ENCODE measurements at regions of chr11 and their contacts with region 1.

Region 1: GRCh38 chr11:2532704-2533586 is 88.1 kb downstream of the KCNQ1 start:
- DNase-seq: peak; percentile 85 to 97 (median 92)
- ATAC-seq: peak; percentile 86
- H3K4me3 ChIP-seq: peak overlapping the region; percentile 18 to 28
- H3K4me3 Mint-ChIP-seq: peak overlapping the region; percentile 76
- H3K27ac ChIP-seq: no peak overlapping the region
- H3K27ac Mint-ChIP-seq: no peak overlapping the region
- H3K4me1 ChIP-seq: peaks cover 19% of the 10 kb centered on the region
- H3K4me1 Mint-ChIP-seq: peaks cover 20% of the 10 kb centered on the region
- H3K27me3 ChIP-seq: no peaks in the 10 kb centered on the region
- H3K27me3 Mint-ChIP-seq: no peaks in the 10 kb centered on the region
- CTCF ChIP-seq: peak; percentile 94

Region 2: GRCh38 chr11:2186669-2187279 is 346.2 kb before region 1 on chr11:
- CTCF ChIA-PET with region 1: interaction called, 13 read pairs
- POLR2A ChIA-PET with region 1: no interaction called
- intact Hi-C with region 1: loop called in 1 of 2 experiments (anchors 5 kb)
- DNase-seq: peak; percentile 32 to 78 (median 52)
- ATAC-seq: peak; percentile 97
- H3K4me3 ChIP-seq: no peak overlapping the region
- H3K4me3 Mint-ChIP-seq: no peak overlapping the region
- H3K27ac ChIP-seq: no peak overlapping the region
- H3K27ac Mint-ChIP-seq: no peak overlapping the region
- H3K4me1 ChIP-seq: peaks cover 5% of the 10 kb centered on the region
- H3K4me1 Mint-ChIP-seq: peaks cover 5% of the 10 kb centered on the region
- H3K27me3 ChIP-seq: peaks cover 0 to 10% of the 10 kb centered on the region in 2 experiments
- H3K27me3 Mint-ChIP-seq: peaks cover 14% of the 10 kb centered on the region
- CTCF ChIP-seq: peak; percentile 67

Region 3: GRCh38 chr11:2420502-2421225 is 112.3 kb before region 1 on chr11:
- CTCF ChIA-PET with region 1: interaction called, 292 read pairs
- POLR2A ChIA-PET with region 1: no interaction called
- intact Hi-C with region 1: no loop called
- DNase-seq: peak; percentile 52 to 86 (median 69)
- ATAC-seq: peak; percentile 94
- H3K4me3 ChIP-seq: no peak overlapping the region
- H3K4me3 Mint-ChIP-seq: no peak overlapping the region
- H3K27ac ChIP-seq: no peak overlapping the region
- H3K27ac Mint-ChIP-seq: no peak overlapping the region
- H3K4me1 ChIP-seq: peaks cover 14% of the 10 kb centered on the region
- H3K4me1 Mint-ChIP-seq: peaks cover 4% of the 10 kb centered on the region
- H3K27me3 ChIP-seq: peaks cover 0 to 3% of the 10 kb centered on the region in 2 experiments
- H3K27me3 Mint-ChIP-seq: no peaks in the 10 kb centered on the region
- CTCF ChIP-seq: peak; percentile 83

Region 4: DNA sequence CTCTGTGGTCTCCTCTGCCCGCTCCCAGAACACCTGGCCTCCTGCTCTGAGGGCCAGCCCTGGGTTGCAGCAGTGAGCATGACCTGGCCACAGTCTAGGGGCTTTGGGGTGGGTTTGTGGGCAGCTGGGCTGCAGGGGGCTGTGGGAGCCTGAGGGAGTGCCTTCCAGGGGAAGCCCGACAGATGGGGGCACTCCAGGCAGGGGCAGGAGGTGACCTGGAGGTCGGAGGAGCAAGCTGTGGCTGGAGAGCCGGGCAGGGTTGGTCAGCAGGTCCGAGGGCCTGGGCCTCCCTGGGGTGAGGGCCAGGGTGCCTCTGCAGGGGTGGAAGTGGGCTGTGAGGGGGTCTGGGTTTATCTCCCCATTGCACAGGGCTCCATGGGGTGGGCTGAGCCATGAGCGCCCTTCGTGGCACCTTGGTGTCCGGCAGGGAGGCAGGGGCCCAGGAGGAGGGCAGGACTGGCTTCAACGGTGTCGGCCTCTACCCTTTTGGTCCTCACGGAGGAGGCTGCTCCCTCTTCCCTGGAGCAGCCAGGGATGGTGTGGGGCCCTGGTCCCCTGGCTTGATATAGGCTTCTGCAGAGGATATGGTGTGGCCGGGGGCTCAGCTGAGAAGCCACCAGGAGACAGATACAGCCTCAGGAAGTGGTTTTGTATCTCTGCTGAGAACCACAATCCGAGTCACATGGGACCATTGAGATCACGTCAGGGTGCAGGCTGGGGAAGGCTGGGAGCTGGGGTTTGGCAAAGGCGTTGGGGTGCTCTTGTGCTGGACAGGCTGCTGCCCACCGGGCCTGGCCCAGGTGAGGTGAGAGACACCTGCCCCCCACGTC is 65.9 kb before region 1 on chr11:
- CTCF ChIA-PET with region 1: interaction called, 41 read pairs
- POLR2A ChIA-PET with region 1: no interaction called
- intact Hi-C with region 1: no loop called
- DNase-seq: peak in 8 of 9 experiments; percentile 52 to 87 (median 68)
- ATAC-seq: peak; percentile 97
- H3K4me3 ChIP-seq: peak overlapping the region; percentile 16 to 46
- H3K4me3 Mint-ChIP-seq: peak overlapping the region; percentile 75
- H3K27ac ChIP-seq: no peak overlapping the region
- H3K27ac Mint-ChIP-seq: peak overlapping the region; percentile 8
- H3K4me1 ChIP-seq: peaks cover 64% of the 10 kb centered on the region
- H3K4me1 Mint-ChIP-seq: peaks cover 79% of the 10 kb centered on the region
- H3K27me3 ChIP-seq: peaks cover 0 to 2% of the 10 kb centered on the region in 2 experiments
- H3K27me3 Mint-ChIP-seq: no peaks in the 10 kb centered on the region
- CTCF ChIP-seq: no peak

Region 5: DNA sequence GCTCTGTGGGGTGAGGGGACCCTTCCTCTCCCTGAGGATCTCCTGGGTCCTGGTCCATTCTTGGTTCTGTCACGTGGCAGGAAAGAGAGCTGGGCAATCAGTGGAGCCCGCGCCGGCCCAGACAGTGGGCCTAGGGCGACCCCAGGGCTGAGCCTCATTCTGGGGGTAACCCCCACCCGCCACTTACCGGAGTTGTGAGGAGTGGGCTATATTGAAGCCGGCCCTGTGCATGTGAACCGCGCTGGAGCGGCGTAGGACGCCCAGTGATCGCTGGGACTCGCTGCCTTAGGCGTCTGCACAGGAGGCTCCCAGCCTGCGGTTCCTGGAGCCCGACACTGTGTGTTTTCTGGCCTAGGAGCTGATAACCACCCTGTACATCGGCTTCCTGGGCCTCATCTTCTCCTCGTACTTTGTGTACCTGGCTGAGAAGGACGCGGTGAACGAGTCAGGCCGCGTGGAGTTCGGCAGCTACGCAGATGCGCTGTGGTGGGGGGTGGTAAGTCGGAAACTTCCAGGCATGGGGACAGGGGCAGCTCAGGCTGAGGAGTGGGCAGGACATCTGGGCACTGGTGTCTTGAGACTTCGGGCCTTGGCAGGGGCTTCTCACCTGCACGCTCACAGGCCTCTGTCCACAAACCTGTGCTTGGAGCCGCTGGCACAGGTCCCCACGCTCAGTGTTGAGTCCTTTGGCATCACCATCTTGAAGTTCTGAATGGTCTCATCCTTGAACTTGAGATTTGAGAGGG is 39.7 kb after region 1 on chr11:
- CTCF ChIA-PET with region 1: no interaction called
- POLR2A ChIA-PET with region 1: no interaction called
- intact Hi-C with region 1: no loop called
- DNase-seq: no peak
- ATAC-seq: no peak
- H3K4me3 ChIP-seq: no peak overlapping the region
- H3K4me3 Mint-ChIP-seq: no peak overlapping the region
- H3K27ac ChIP-seq: no peak overlapping the region
- H3K27ac Mint-ChIP-seq: no peak overlapping the region
- H3K4me1 ChIP-seq: no peaks in the 10 kb centered on the region
- H3K4me1 Mint-ChIP-seq: no peaks in the 10 kb centered on the region
- H3K27me3 ChIP-seq: no peaks in the 10 kb centered on the region
- H3K27me3 Mint-ChIP-seq: no peaks in the 10 kb centered on the region
- CTCF ChIP-seq: no peak

Region 6: DNA sequence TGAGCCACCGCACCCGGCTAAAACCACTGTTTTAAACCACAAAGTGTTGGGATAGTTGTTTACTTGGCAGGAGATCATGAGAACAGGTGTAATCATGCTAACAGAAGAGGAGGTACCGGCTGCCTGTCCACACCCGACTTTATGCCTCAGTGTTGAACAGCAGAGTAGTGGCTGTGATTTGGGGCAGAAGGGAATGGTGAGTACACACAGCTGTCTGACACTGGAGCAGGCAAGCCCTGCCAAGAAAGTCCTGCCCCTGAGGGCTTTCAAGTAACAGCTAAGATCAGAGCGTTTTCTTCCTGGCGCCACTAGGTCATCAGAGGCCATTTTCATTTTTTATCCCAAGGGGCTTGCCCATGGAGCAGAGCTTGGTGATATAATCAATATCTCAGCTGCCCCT is 344.5 kb after region 1 on chr11:
- CTCF ChIA-PET with region 1: interaction called, 24 read pairs
- POLR2A ChIA-PET with region 1: interaction called, 3 read pairs
- intact Hi-C with region 1: no loop called
- DNase-seq: no peak
- ATAC-seq: no peak
- H3K4me3 ChIP-seq: no peak overlapping the region
- H3K4me3 Mint-ChIP-seq: no peak overlapping the region
- H3K27ac ChIP-seq: no peak overlapping the region
- H3K27ac Mint-ChIP-seq: no peak overlapping the region
- H3K4me1 ChIP-seq: no peaks in the 10 kb centered on the region
- H3K4me1 Mint-ChIP-seq: no peaks in the 10 kb centered on the region
- H3K27me3 ChIP-seq: no peaks in the 10 kb centered on the region
- H3K27me3 Mint-ChIP-seq: peaks cover 2% of the 10 kb centered on the region
- CTCF ChIP-seq: no peak

Region 7: DNA sequence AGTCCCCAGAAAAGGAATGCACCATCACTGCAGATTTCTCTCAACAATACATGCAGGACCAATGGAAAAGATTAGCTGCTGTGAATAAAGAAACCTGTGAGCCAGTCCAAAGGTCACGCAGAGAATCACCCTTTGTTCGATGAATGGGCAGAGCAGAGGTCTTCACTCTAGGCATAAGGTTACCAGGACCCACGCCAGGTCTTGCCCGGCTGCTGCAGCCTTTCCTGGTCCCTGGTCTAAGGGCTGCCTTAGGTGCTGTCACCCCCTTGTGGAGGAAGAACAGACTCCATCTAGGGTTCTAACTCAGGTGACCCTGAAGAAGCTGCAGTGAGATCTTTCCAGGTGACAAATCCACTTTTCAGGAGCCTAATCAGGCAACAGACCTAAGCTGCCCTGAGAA is 488.2 kb after region 1 on chr11:
- CTCF ChIA-PET with region 1: interaction called, 45 read pairs
- POLR2A ChIA-PET with region 1: no interaction called
- intact Hi-C with region 1: loop called in 1 of 2 experiments (anchors 1 kb)
- DNase-seq: peak in 8 of 9 experiments; percentile 24 to 75 (median 61)
- ATAC-seq: peak; percentile 83
- H3K4me3 ChIP-seq: no peak overlapping the region
- H3K4me3 Mint-ChIP-seq: no peak overlapping the region
- H3K27ac ChIP-seq: no peak overlapping the region
- H3K27ac Mint-ChIP-seq: no peak overlapping the region
- H3K4me1 ChIP-seq: peaks cover 56% of the 10 kb centered on the region
- H3K4me1 Mint-ChIP-seq: peaks cover 64% of the 10 kb centered on the region
- H3K27me3 ChIP-seq: no peaks in the 10 kb centered on the region
- H3K27me3 Mint-ChIP-seq: no peaks in the 10 kb centered on the region
- CTCF ChIP-seq: peak; percentile 75

Measured in CD8-positive, alpha-beta T cell (primary cell).